ENCODE measurements at regions of chr1 and their contacts with region 1.

Region 1: GRCh38 chr1:241408170-241408569 is 51.2 kb upstream of the RGS7 start:
- DNase-seq: peak; percentile 78
- ATAC-seq: peak; percentile 87
- H3K4me3 ChIP-seq: no peak overlapping the region
- H3K27ac ChIP-seq: no peak overlapping the region
- H3K4me1 ChIP-seq: no peaks in the 10 kb centered on the region
- H3K27me3 ChIP-seq: peaks cover 12% of the 10 kb centered on the region; the same call in 1 of the 2 replicates
- CTCF ChIP-seq: peak; percentile 85

Region 2: DNA sequence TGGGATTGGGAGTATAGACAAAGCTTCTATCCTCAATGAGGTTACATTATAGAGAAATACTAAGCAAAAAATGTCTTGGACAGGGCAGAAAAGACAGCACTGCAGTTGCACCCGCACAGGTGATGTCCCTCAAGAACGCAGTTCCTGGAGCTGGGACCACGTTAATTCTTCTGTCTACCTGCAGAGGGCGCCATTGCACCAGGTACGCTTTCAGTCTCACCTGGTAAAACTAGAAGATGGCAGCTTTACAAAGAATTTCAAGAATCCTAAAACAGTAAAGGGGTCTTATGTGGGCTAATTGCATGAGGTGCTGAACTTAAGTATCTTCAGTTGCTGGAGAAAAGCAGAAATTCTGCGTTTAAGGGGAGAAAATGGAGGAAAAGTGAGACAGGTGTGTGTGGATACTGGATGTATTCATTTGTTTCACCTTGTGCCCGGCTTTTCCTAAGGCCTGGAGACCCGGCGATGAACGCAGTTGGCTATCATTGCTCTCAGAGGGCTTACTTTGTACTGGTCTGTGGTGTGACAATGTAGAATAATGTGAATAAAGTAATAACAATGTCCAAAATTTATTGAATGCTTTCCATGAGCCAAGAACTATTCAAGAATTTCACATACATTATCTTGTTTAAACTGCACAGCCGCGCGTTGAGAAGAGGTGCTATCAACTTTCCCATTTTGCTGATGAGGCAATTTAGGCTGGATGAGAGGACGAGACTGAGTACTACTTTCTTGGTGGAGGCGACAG is 520.0 kb before region 1 on chr1:
- CTCF ChIA-PET with region 1: no interaction called
- POLR2A ChIA-PET with region 1: no interaction called
- intact Hi-C with region 1: loop called (anchors 1 kb)
- DNase-seq: peak; percentile 83
- ATAC-seq: peak; percentile 64
- H3K4me3 ChIP-seq: no peak overlapping the region
- H3K27ac ChIP-seq: no peak overlapping the region
- H3K4me1 ChIP-seq: no peaks in the 10 kb centered on the region
- H3K27me3 ChIP-seq: peaks cover 25% of the 10 kb centered on the region
- CTCF ChIP-seq: peak; percentile 99

Region 3: DNA sequence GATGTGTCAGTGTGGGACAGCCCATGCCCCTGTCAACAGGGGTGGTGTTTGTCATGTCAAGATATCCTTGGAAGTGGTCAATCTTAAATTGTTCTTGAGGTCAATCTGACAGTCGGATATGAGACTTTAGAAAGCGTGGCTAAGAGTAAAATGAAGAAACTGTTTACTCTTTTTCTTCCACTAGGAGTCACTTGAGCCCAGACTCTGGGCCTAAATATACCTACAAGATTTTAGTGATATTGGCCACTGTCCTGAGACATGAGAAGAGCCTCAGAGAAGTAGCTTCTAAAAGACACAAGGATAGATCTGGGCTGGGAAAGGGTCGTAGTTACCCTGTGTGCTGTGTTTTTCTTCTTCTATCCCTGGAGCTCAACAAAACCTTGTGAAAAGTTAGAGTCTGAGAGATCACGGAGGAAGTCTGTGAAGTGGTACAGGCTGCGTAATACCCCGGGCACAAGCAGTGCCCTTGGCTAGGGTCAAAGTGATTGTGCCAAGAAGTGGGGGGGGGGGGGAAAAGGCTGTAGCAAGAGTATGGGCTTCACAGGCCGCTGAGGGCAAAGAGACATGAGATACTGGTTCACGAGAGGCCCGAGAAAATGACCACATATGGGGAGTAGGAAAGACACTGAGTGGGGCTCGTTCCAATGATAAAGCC is 441.0 kb before region 1 on chr1:
- CTCF ChIA-PET with region 1: no interaction called
- POLR2A ChIA-PET with region 1: no interaction called
- intact Hi-C with region 1: loop called (anchors 1 kb)
- DNase-seq: peak; percentile 84
- ATAC-seq: peak; percentile 60
- H3K4me3 ChIP-seq: no peak overlapping the region
- H3K27ac ChIP-seq: no peak overlapping the region
- H3K4me1 ChIP-seq: peaks cover 10% of the 10 kb centered on the region; the same call in 1 of the 2 replicates
- H3K27me3 ChIP-seq: peaks cover 86% of the 10 kb centered on the region
- CTCF ChIP-seq: peak; percentile 91

Region 4: DNA sequence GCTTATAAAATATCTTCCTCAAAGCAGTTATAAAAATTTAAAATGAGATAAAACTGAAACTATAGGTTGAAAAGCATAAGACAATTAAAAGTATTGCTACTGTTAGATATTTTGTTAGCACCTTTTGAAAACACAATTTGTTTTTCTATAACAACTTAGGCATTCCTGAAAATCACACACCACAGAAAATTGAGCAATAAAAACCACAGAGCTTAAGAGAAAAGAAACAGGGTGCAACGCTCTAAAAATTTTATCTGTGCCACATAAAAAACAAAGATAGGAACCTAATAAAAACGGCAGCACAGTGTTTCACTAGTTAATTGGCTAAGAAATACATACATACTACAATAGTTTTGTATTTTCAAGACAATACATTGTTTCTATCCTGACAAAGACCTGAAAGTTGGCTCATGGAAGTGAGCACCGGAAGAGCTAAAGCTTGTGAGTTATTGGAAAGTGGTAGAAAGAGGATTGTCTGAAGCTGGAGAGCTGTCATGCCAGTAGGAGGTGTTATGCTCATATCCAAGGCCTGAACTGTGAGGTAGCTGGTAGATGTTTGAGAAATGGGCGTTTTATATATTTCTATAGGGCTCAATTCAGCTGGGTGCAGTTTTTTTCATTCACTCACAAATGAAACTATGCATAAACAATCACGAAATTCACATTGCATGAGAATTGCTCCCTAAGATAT is 97.0 kb before region 1 on chr1:
- CTCF ChIA-PET with region 1: interaction called, 9 read pairs
- POLR2A ChIA-PET with region 1: no interaction called
- intact Hi-C with region 1: loop called (anchors 1 kb)
- DNase-seq: peak; percentile 43
- ATAC-seq: peak; percentile 52
- H3K4me3 ChIP-seq: no peak overlapping the region
- H3K27ac ChIP-seq: no peak overlapping the region
- H3K4me1 ChIP-seq: peaks cover 14% of the 10 kb centered on the region
- H3K27me3 ChIP-seq: no peaks in the 10 kb centered on the region; the same call in none of the 2 replicates
- CTCF ChIP-seq: peak; percentile 55